Heart left ventricle (tissue), 16 donors: ENCODE measurements at regions of chr2 and their contacts with region 1.

Region 1: GRCh38 chr2:205925373-205926337 is 160.3 kb downstream of the INO80D start:
- DNase-seq: peak; percentile 68 to 91 (median 77)
- ATAC-seq: peak; percentile 76 to 94 (median 90)
- H3K4me3 ChIP-seq: peak overlapping the region in 8 of 12 donors; percentile 6 to 44 (median 20)
- H3K27ac ChIP-seq: peak overlapping the region in 1 of 12 donors; percentile 28
- H3K4me1 ChIP-seq: peaks cover 0 to 20% (median 5%) of the 10 kb centered on the region in 12 donors
- H3K27me3 ChIP-seq: peaks cover 0 to 31% (median 0%) of the 10 kb centered on the region in 9 donors
- CTCF ChIP-seq: peak; percentile 83 to 98 (median 92)
- POLR2A ChIP-seq: no peak

Region 2: GRCh38 chr2:204145263-204145751 is 1780.3 kb before region 1 on chr2:
- intact Hi-C with region 1: loop called in 1 of 10 experiments (anchors 10 kb)
- DNase-seq: peak; percentile 72 to 82 (median 75)
- ATAC-seq: peak; percentile 84 to 99 (median 95)
- H3K4me3 ChIP-seq: peak overlapping the region in 11 of 12 donors; percentile 25 to 61 (median 47)
- H3K27ac ChIP-seq: peak overlapping the region in 9 of 12 donors; percentile 3 to 67 (median 46)
- H3K4me1 ChIP-seq: peaks cover 0 to 15% (median 1%) of the 10 kb centered on the region in 12 donors
- H3K27me3 ChIP-seq: peaks cover 0 to 4% (median 0%) of the 10 kb centered on the region in 9 donors
- CTCF ChIP-seq: peak; percentile 89 to 99 (median 96)
- POLR2A ChIP-seq: no peak

Region 3: DNA sequence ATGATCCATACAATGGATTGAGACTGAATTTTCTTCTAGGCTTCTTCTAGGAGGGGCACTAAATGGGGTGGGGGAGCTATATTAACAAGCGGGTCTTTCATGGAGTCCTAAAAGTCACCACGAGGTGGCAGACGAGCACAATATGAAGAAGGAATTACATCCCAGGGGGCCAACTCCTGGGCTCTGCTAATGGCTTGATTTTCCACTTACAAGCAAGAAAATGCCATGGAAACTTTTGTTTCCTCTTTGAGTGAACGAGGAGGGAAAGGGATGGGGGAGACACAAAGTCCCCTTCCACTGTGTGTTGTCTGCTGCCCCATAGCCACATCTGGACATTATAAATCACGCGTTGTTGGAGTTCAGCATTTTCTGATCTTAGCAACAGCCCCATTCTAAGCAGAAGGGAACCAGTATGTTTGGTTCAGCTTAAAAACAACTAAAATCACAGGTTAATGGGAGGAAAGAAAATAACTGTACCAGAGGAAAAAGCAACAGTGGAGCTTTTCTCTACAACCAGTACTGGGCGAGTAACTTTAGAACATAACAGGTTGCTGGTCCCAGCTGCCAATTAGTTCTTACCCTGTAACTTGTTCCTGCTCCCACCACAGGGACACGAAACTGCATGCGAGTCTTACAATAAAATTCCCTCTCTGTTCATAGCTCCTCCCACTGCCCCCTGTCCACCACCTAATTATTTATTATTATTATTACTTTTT is 1665.3 kb before region 1 on chr2:
- intact Hi-C with region 1: loop called in 4 of 10 experiments (anchors 5 to 10 kb)
- DNase-seq: peak in 4 of 5 donors; percentile 50 to 70 (median 56)
- ATAC-seq: peak; percentile 65 to 82 (median 73)
- H3K4me3 ChIP-seq: peak overlapping the region in 1 of 12 donors; percentile 4
- H3K27ac ChIP-seq: peak overlapping the region in 1 of 12 donors; percentile 11
- H3K4me1 ChIP-seq: peaks cover 0 to 18% (median 9%) of the 10 kb centered on the region in 12 donors
- H3K27me3 ChIP-seq: peaks cover 0 to 3% (median 0%) of the 10 kb centered on the region in 9 donors
- CTCF ChIP-seq: peak; percentile 61 to 84 (median 78)
- POLR2A ChIP-seq: no peak

Region 4: GRCh38 chr2:205766779-205767359 is 158.8 kb before region 1 on chr2:
- intact Hi-C with region 1: loop called in 8 of 10 experiments (anchors 2 to 10 kb)
- DNase-seq: peak in 4 of 5 donors; percentile 35 to 60 (median 48)
- ATAC-seq: peak in 1 of 4 donors; percentile 49
- H3K4me3 ChIP-seq: no peak overlapping the region
- H3K27ac ChIP-seq: peak overlapping the region in 2 of 12 donors; percentile 58 to 85
- H3K4me1 ChIP-seq: peaks cover 0 to 32% (median 14%) of the 10 kb centered on the region in 12 donors
- H3K27me3 ChIP-seq: peaks cover 0 to 10% (median 2%) of the 10 kb centered on the region in 9 donors
- CTCF ChIP-seq: peak; percentile 78 to 90 (median 84)
- POLR2A ChIP-seq: no peak

Region 5: DNA sequence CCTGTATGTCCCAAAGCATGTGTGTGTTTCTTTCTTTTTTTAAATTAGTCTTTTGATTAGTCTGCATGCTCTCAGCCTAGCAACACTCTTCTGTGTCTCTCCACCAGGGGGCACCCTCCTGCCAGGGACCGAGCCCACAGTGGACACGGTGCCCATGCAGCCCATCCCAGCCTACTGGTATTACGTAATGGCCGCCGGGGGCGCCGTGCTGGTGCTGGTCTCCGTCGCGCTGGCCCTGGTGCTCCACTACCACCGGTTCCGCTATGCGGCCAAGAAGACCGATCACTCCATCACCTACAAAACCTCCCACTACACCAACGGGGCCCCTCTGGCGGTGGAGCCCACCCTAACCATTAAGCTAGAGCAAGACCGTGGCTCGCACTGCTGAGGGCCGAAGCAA is 149.5 kb before region 1 on chr2:
- intact Hi-C with region 1: loop called in 6 of 10 experiments (anchors 2 to 10 kb)
- DNase-seq: peak in 4 of 5 donors; percentile 36 to 73 (median 54)
- ATAC-seq: peak in 3 of 4 donors; percentile 75 to 84 (median 82)
- H3K4me3 ChIP-seq: no peak overlapping the region
- H3K27ac ChIP-seq: peak overlapping the region in 1 of 12 donors; percentile 85
- H3K4me1 ChIP-seq: no peaks in the 10 kb centered on the region
- H3K27me3 ChIP-seq: peaks cover 0 to 6% (median 0%) of the 10 kb centered on the region in 9 donors
- CTCF ChIP-seq: peak; percentile 45 to 68 (median 58)
- POLR2A ChIP-seq: no peak

Region 6: GRCh38 chr2:206064077-206064476 is 138.4 kb after region 1 on chr2:
- intact Hi-C with region 1: no loop called
- DNase-seq: no peak
- ATAC-seq: no peak
- H3K4me3 ChIP-seq: no peak overlapping the region
- H3K27ac ChIP-seq: no peak overlapping the region
- H3K4me1 ChIP-seq: no peaks in the 10 kb centered on the region
- H3K27me3 ChIP-seq: no peaks in the 10 kb centered on the region
- CTCF ChIP-seq: no peak
- POLR2A ChIP-seq: no peak

Region 7: DNA sequence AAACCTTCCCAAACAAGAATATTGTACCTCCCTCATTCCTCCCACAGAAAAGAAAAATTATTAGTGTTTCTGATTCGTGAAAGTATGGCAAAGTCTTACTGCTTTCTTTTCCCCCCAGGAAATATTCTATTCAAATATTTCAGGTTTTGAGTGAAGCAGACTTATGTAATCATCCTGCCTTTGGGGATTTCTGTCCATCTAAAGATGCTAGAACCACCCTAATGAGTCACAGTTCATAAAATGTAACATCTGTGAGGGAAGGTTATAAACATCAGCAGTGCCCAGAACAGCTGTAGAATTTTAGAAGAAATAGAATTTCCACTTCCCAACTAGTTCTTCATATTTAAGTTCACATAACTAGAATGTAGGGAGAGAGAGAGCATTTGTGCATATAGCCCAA is 273.0 kb after region 1 on chr2:
- intact Hi-C with region 1: no loop called
- DNase-seq: no peak
- ATAC-seq: peak in 2 of 4 donors; percentile 50 to 53
- H3K4me3 ChIP-seq: no peak overlapping the region
- H3K27ac ChIP-seq: peak overlapping the region in 3 of 12 donors; percentile 9 to 60 (median 46)
- H3K4me1 ChIP-seq: peaks cover 0 to 5% (median 0%) of the 10 kb centered on the region in 12 donors
- H3K27me3 ChIP-seq: no peaks in the 10 kb centered on the region
- CTCF ChIP-seq: no peak
- POLR2A ChIP-seq: no peak